Esophagus muscularis mucosa (tissue), 4 donors: ENCODE measurements at regions of chr19 and their contacts with region 1.

Region 1: GRCh38 chr19:40598121-40598917 is 2.9 kb upstream of the LTBP4 start:
- DNase-seq: peak; percentile 97
- H3K4me3 ChIP-seq: peak overlapping the region in 3 of 4 donors; percentile 7 to 35 (median 27)
- H3K27ac ChIP-seq: peak overlapping the region in 2 of 4 donors; percentile 4 to 88
- H3K4me1 ChIP-seq: peaks cover 65 to 70% (median 69%) of the 10 kb centered on the region in 4 donors
- H3K27me3 ChIP-seq: peaks cover 3 to 83% (median 24%) of the 10 kb centered on the region in 4 donors
- CTCF ChIP-seq: peak in 2 of 3 experiments; percentile 96 to 97
- EP300 ChIP-seq: no peak
- POLR2A ChIP-seq: no peak

Region 2: GRCh38 chr19:40465557-40466150 is 132.7 kb before region 1 on chr19 and contains the start of gene BLVRB:
- intact Hi-C with region 1: loop called (anchors 2 kb)
- DNase-seq: peak; percentile 100
- H3K4me3 ChIP-seq: peak within 1 kb of the TSS; percentile 69 to 89 (median 80)
- H3K27ac ChIP-seq: peak within 1 kb of the TSS; percentile 89 to 94 (median 92)
- H3K4me1 ChIP-seq: peaks cover 27 to 53% (median 50%) of the 10 kb centered on the region in 4 donors
- H3K27me3 ChIP-seq: no peaks in the 10 kb centered on the region
- CTCF ChIP-seq: peak in 1 of 3 experiments; percentile 20
- EP300 ChIP-seq: no peak
- POLR2A ChIP-seq: peak; percentile 80
- total RNA-seq, gene BLVRB: 159 to 223 (median 194) TPM

Region 3: GRCh38 chr19:40549007-40549708 is 49.2 kb before region 1 on chr19:
- intact Hi-C with region 1: loop called (anchors 1 kb)
- DNase-seq: no peak
- H3K4me3 ChIP-seq: no peak overlapping the region
- H3K27ac ChIP-seq: no peak overlapping the region
- H3K4me1 ChIP-seq: peaks cover 3 to 10% (median 7%) of the 10 kb centered on the region in 4 donors
- H3K27me3 ChIP-seq: peaks cover 0 to 26% (median 2%) of the 10 kb centered on the region in 4 donors
- CTCF ChIP-seq: peak; percentile 20 to 60 (median 50)
- EP300 ChIP-seq: no peak
- POLR2A ChIP-seq: no peak